WTC11 (cell line): ENCODE measurements at regions of chr2 and their contacts with region 1.

Region 1: GRCh38 chr2:196481324-196481697 is 158.2 kb upstream of the CCDC150 start:
- DNase-seq: no peak
- ATAC-seq: no peak
- H3K4me3 Mint-ChIP-seq: no peak overlapping the region
- H3K27ac Mint-ChIP-seq: no peak overlapping the region
- H3K4me1 Mint-ChIP-seq: 0 out of 2 replicates have a peak, but pooled peaks cover 3% of the 10 kb centered on the region
- H3K27me3 Mint-ChIP-seq: no peaks in the 10 kb centered on the region
- CTCF ChIP-seq: no peak

Region 2: DNA sequence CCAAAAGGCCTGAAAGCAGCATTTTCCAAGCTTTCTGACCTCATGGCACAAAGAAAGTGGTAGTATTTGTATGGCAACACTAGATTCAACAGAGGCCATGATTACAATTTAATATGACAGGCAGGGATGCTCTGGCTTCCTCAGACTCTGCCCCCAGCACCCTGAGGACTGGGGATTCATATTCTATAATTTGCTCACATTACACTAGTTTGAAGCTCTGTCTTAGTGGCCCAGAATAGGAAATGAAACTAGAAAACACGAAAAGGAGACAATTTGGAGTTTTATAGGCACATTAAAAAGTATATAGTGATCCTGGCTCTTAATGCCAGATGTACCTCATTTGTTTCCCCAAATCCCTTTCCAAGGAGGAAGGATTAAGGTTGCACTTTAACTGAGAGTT is 136.9 kb before region 1 on chr2:
- CTCF ChIA-PET with region 1: no interaction called
- POLR2A ChIA-PET with region 1: interaction called, 12 read pairs
- DNase-seq: no peak
- ATAC-seq: no peak
- H3K4me3 Mint-ChIP-seq: no peak overlapping the region
- H3K27ac Mint-ChIP-seq: no peak overlapping the region
- H3K4me1 Mint-ChIP-seq: no peaks in the 10 kb centered on the region
- H3K27me3 Mint-ChIP-seq: no peaks in the 10 kb centered on the region; the same call in 1 of the 2 replicates
- CTCF ChIP-seq: no peak